ENCODE measurements at regions of chr15 and their contacts with region 1.

Region 1: DNA sequence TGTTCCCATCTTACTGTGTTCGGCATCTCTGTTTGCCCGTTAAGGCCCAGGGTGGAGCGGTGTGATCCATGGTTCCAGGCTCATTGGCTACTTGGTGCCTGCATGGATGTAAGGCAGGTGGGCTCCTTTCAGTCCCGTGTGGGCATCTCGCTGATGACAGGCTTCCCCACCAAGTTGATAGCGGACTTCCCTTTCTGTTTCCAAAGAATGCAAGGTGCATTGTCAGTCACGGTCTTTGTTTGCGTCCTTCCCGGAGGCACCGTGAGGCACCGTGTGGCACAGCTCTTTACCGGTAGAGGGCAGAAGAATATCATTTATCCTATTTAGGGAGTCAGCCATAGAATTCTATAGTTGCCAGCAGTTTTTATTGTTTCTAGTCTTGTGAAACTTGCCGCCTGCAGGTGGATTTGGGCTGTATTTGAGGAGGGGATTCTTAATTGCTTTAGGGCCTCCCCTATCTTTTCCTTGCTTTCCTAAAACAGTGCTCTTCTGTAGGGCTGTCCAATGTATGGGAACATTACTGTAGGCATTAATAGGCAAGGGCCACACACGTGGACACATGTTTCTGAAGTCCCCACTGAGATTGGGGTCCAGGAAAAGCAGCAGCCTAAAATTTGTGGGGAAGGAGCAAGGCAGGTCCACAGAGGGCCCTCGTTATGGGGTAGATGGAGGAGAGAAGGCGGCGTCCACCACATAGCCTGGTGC is 244.1 kb downstream of the SLCO3A1 start:
- DNase-seq: no peak
- ATAC-seq: peak; percentile 72 to 88 (median 77)
- H3K4me3 ChIP-seq: no peak overlapping the region
- H3K27ac ChIP-seq: no peak overlapping the region
- H3K4me1 ChIP-seq: peaks cover 5% of the 10 kb centered on the region
- H3K27me3 ChIP-seq: no peaks in the 10 kb centered on the region
- CTCF ChIP-seq: peak; percentile 73

Region 2: DNA sequence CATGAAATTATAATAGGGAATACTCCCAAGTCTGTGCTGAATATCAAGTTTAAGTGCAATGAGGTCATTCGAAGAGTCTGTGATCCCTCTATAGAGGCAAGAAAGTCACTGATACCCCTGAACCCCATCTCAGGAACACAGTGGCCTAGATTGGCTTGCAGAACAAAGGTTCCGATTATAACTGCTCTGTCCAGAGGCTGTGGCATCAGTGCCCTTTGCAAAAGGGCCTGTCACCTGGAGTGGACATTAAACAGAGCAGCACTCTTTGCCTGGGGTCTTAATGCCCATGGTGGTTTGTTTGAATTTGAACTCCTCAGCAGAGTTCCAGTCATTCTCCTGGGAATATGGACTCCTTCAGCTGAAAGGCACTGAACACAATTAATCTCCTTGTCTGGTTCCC is 338.1 kb before region 1 on chr15:
- intact Hi-C with region 1: no loop called
- DNase-seq: no peak
- ATAC-seq: no peak
- H3K4me3 ChIP-seq: no peak overlapping the region
- H3K27ac ChIP-seq: no peak overlapping the region
- H3K4me1 ChIP-seq: no peaks in the 10 kb centered on the region
- H3K27me3 ChIP-seq: peaks cover 0 to 2% (median 0%) of the 10 kb centered on the region in 3 donors
- CTCF ChIP-seq: no peak

Region 3: GRCh38 chr15:92226014-92226612 is 128.5 kb after region 1 on chr15:
- intact Hi-C with region 1: loop called (anchors 2 to 5 kb)
- DNase-seq: no peak
- ATAC-seq: peak in 1 of 4 donors; percentile 42
- H3K4me3 ChIP-seq: no peak overlapping the region
- H3K27ac ChIP-seq: no peak overlapping the region
- H3K4me1 ChIP-seq: no peaks in the 10 kb centered on the region
- H3K27me3 ChIP-seq: peaks cover 0 to 3% (median 0%) of the 10 kb centered on the region in 3 donors
- CTCF ChIP-seq: peak; percentile 41

Region 4: DNA sequence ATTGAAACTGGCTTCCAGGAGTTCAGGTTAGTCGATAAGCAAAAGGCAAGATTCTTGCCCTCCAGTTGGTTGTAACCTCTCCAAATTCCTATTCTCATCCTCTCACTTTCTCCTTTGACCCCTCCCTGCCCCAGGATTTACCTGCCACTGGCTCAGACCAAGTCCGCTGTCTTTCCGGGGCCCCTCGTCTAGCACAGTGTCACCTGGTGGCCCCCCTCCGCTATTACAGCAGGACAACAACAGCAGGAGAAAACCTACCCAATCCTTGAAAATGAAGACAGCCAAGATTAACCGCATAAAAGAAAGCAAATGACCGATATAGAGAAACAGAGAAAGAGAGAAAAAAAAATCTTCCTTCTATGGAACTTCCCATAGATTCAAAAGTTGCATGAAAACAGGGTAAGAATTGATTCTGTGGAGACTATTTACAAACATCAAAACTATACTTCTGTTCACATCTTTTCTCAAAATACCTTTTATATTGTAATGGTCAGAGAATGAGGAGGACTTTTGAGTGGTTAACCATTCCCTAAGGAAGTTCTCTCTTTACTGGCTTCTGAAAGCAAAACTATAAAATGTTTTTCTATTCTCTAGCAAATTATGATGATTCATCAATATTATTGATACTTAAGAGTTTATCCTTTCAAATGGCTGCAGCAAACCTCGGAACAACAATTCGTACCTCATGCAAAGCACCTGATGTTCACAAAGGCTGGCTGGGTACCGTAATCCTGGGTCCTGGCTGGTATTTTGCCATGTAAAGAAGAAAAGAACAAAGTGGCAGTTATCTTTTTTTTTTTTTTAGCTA is 286.1 kb after region 1 on chr15:
- intact Hi-C with region 1: loop called (anchors 5 kb)
- DNase-seq: no peak
- ATAC-seq: peak in 1 of 4 donors; percentile 68
- H3K4me3 ChIP-seq: no peak overlapping the region
- H3K27ac ChIP-seq: no peak overlapping the region
- H3K4me1 ChIP-seq: no peaks in the 10 kb centered on the region
- H3K27me3 ChIP-seq: peaks cover 0 to 8% (median 6%) of the 10 kb centered on the region in 3 donors
- CTCF ChIP-seq: peak; percentile 32

Measured in psoas muscle (tissue), 8 donors.